Heart right ventricle (tissue), 16 donors: ENCODE measurements at regions of chr22 and their contacts with region 1.

Region 1: DNA sequence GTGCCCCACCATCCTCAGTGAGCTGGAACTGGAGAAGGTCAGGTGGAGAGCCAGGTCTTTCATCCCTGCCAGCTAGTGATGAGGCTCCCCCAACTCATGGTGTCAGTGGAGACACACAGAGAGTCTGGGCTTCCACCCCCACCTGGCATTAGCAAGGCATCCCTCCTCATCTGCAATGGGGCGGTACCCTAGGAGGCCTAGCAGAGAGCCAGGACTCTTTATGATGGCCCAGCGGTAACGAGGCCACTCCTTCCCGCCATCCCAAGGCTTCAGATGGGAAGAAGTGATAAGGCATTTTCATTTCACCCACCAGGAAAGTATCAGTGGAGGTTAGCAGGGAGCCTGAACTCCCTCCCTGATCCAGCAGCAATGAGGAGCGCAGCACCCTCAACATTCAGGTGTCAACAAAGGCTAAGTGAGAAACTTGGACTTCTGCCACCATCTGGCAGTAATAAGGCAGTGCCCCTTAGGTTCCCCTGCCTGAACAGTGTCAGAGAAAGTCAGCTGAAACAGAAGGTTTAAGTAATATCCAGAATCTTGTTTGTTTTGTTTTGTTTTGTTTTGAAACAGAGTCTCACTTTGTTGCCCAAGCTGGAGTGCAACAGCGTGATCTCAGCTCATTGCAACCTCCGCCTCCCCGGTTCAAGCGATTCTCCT is 40.5 kb upstream of the FBLN1 start:
- DNase-seq: no peak
- ATAC-seq: no peak
- H3K4me3 ChIP-seq: no peak overlapping the region
- H3K27ac ChIP-seq: no peak overlapping the region
- H3K4me1 ChIP-seq: peaks cover 0 to 19% (median 5%) of the 10 kb centered on the region in 9 donors
- H3K27me3 ChIP-seq: peaks cover 0 to 2% (median 0%) of the 10 kb centered on the region in 7 donors
- CTCF ChIP-seq: no peak

Region 2: DNA sequence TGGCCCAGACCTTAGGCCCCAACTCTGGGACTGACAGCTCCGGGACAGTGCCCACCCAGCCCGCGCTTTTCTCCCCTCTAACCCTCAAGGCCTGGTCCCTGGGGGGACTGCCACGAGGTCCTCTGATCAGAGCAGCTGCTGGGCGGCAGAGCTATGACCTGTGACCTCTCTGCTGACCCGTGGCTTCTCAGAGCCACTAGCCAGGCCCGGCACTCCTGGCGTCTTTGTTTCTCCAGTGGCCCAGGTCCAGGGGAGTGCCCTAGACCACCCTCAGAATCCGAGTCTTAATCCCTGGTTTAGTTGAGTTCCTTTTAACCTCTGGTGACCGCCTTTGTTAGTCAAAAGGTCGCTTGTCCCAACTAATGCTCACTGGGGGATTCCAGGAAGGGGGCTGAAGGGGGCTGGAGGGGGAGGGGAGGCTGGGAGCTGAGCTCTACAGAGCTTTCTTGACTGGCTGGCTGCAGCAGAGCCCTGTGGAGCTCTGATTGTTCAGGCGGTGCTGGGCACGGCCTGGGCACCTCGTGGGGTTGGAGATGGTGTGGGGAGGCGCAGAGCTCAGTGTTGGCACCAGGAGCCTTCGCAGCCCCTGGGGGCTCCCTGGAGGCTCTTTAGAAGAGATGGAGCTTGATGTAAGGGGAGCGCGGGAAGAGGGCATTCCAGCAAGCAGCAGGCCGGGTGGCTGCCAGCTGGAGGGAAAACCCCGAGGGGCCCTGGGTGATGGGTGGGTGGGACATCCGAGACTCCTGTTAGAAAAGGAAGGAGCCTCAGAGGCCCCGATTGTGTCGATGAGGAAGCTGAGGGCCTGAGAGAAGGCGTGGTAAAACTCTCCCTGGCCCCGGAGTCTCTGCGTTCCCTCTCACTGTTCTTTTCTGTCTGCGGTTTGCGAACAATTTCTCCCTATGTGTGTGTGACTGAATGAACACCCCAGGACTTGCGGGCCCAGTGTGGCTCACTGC is 41.9 kb after region 1 on chr22:
- intact Hi-C with region 1: loop called in 2 of 10 experiments (anchors 5 kb)
- DNase-seq: no peak
- ATAC-seq: peak in 1 of 8 donors; percentile 15
- H3K4me3 ChIP-seq: peak overlapping the region; percentile 22 to 64 (median 54)
- H3K27ac ChIP-seq: peak overlapping the region in 9 of 10 donors; percentile 59 to 82 (median 67)
- H3K4me1 ChIP-seq: peaks cover 0 to 32% (median 11%) of the 10 kb centered on the region in 9 donors
- H3K27me3 ChIP-seq: peaks cover 8 to 59% (median 40%) of the 10 kb centered on the region in 7 donors
- CTCF ChIP-seq: no peak

Region 3: GRCh38 chr22:45742866-45743450 is 280.8 kb after region 1 on chr22:
- intact Hi-C with region 1: no loop called
- DNase-seq: no peak
- ATAC-seq: peak in 1 of 8 donors; percentile 73
- H3K4me3 ChIP-seq: no peak overlapping the region
- H3K27ac ChIP-seq: peak overlapping the region in 2 of 10 donors; percentile 22 to 57
- H3K4me1 ChIP-seq: peaks cover 0 to 21% (median 18%) of the 10 kb centered on the region in 9 donors
- H3K27me3 ChIP-seq: no peaks in the 10 kb centered on the region
- CTCF ChIP-seq: no peak